Activated B cell treated with CpG ODN at 0.5 μM for 24 hours (primary cell): ENCODE measurements at regions of chr15 and their contacts with region 1.

Region 1: DNA sequence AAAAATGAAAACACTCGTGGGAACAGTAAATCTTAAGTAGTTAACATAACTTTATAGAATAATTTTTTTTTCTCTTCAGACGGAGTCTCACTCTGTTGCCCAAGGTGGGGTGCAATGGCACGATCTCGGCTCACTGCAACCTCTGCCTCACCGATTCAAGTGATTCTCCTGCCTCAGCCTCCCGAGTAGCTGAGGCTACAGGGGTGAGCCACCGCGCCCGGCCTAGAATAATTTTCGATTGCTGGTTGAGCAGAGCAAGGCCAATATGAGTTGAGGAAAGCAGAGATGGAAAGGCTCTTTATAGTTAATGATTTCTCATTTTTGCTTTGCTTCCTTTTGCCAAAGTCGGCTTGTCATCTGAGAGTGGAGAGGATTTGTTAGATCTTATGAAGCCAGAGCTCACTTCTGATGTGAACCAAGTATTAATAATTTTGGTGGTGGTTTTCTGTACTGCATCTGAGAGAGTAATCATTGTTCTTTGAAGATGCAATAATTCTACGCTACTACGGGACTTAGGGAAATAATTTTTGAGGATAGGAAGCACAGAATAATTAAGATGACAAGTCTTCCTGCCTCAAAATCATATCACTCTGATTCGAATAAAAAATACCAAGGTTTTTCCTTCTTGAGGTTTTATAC is 1.6 kb upstream of the GOLM2 start:
- DNase-seq: no peak
- ATAC-seq: no peak
- H3K4me3 Mint-ChIP-seq: peak overlapping the region; percentile 90
- H3K27ac Mint-ChIP-seq: peak overlapping the region; percentile 99
- H3K4me1 Mint-ChIP-seq: peaks cover 42% of the 10 kb centered on the region
- H3K27me3 Mint-ChIP-seq: peaks cover 3% of the 10 kb centered on the region
- CTCF ChIP-seq: no peak

Region 2: GRCh38 chr15:43107751-43108150 is 1179.2 kb before region 1 on chr15:
- CTCF ChIA-PET with region 1: no interaction called
- POLR2A ChIA-PET with region 1: no interaction called
- intact Hi-C with region 1: no loop called
- DNase-seq: no peak
- ATAC-seq: no peak
- H3K4me3 Mint-ChIP-seq: no peak overlapping the region
- H3K27ac Mint-ChIP-seq: no peak overlapping the region
- H3K4me1 Mint-ChIP-seq: peaks cover 34% of the 10 kb centered on the region
- H3K27me3 Mint-ChIP-seq: no peaks in the 10 kb centered on the region
- CTCF ChIP-seq: no peak

Region 3: DNA sequence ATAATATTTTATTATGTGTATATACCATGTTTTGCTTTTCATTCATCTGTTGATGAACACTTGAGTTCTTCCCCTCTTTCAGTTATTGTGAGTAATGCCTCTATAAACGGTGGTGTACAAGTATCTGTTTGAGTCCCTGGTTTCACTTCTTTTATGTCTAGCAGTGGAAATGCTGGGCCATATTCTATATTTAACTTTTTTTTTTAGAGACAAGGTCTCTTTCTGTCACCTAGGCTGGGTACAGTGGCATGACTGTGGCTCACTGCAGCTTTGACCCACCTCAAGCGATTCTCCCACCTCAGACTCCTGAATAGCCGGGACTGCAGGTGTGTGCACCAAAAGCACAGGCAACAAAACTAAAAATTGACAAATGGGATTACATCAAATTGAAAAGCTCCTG is 21.5 kb after region 1 on chr15:
- CTCF ChIA-PET with region 1: interaction called, 4 read pairs
- POLR2A ChIA-PET with region 1: interaction called, 27 read pairs
- intact Hi-C with region 1: loop called (anchors 1 kb)
- DNase-seq: no peak
- ATAC-seq: peak; percentile 85
- H3K4me3 Mint-ChIP-seq: peak overlapping the region; percentile 69
- H3K27ac Mint-ChIP-seq: peak overlapping the region; percentile 88
- H3K4me1 Mint-ChIP-seq: peaks cover 68% of the 10 kb centered on the region
- H3K27me3 Mint-ChIP-seq: no peaks in the 10 kb centered on the region
- CTCF ChIP-seq: no peak

Region 4: GRCh38 chr15:44536962-44537734 is 250.2 kb after region 1 on chr15 and contains the start of gene EIF3J:
- CTCF ChIA-PET with region 1: no interaction called
- POLR2A ChIA-PET with region 1: interaction called, 15 read pairs
- intact Hi-C with region 1: loop called (anchors 2 kb)
- DNase-seq: peak; percentile 90
- ATAC-seq: peak; percentile 89
- H3K4me3 Mint-ChIP-seq: peak within 1 kb of the TSS; percentile 92
- H3K27ac Mint-ChIP-seq: peak within 1 kb of the TSS; percentile 93
- H3K4me1 Mint-ChIP-seq: peaks cover 50% of the 10 kb centered on the region
- H3K27me3 Mint-ChIP-seq: no peaks in the 10 kb centered on the region
- CTCF ChIP-seq: no peak
- total RNA-seq, gene EIF3J: 78.9 and 88.4 TPM in 2 replicates